Colonic mucosa (tissue), 4 donors: ENCODE measurements at regions of chr14 and their contacts with region 1.

Region 1: GRCh38 chr14:90235179-90235976 is 21.0 kb upstream of the PSMC1 start:
- DNase-seq: peak; percentile 70
- H3K4me3 ChIP-seq: no peak overlapping the region
- H3K27ac ChIP-seq: no peak overlapping the region
- H3K4me1 ChIP-seq: no peaks in the 10 kb centered on the region
- H3K27me3 ChIP-seq: no peaks in the 10 kb centered on the region
- CTCF ChIP-seq: peak; percentile 92

Region 2: DNA sequence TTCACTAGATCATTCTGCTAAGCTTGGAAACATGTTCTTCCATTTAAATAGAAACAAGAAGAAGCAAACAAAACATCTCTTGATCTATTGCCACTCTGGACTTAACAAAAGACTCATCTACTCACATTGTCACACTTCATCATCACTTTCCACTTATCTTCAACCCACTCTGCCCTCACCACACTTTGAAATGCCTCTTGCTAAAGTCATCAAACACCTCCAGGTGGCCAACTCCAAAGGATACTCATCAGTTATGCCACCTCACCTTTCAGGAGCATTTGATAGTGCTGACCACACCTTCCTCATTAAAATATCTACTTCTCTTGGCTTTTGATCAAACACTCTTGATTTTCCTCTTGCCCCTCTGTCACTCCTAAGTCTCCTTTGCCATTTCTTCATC is 288.0 kb before region 1 on chr14:
- intact Hi-C with region 1: loop called (anchors 10 kb)
- DNase-seq: no peak
- H3K4me3 ChIP-seq: no peak overlapping the region
- H3K27ac ChIP-seq: no peak overlapping the region
- H3K4me1 ChIP-seq: no peaks in the 10 kb centered on the region
- H3K27me3 ChIP-seq: no peaks in the 10 kb centered on the region
- CTCF ChIP-seq: no peak

Region 3: DNA sequence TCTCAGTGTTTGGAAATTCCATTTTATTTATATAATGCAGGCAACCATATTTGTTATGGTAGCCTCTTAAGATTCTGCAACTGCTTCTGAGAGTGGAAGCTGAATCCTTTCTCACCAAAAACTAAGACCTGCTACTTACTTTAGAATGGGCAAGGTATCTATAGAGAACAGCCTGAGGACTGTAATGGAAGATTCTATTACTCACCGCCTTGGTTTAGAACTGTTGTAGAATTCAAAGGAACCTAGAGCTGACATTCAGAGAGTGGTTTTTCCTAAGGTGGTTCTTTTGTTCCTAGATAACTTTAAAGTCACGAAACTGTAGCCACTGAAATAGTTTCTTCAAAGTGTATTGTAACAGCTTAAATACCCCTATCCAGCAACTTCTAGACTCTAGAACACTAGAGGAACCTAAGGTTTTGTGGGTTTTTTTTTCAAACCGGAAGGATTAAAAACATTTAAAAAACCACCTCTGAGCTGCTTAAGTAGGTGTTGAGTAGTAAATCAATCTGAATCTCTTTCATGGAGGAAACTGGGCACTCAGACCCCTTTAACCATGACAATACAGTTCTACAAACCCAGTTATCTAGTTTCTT is 275.4 kb before region 1 on chr14:
- intact Hi-C with region 1: no loop called
- DNase-seq: no peak
- H3K4me3 ChIP-seq: no peak overlapping the region
- H3K27ac ChIP-seq: no peak overlapping the region
- H3K4me1 ChIP-seq: no peaks in the 10 kb centered on the region
- H3K27me3 ChIP-seq: no peaks in the 10 kb centered on the region
- CTCF ChIP-seq: no peak

Region 4: DNA sequence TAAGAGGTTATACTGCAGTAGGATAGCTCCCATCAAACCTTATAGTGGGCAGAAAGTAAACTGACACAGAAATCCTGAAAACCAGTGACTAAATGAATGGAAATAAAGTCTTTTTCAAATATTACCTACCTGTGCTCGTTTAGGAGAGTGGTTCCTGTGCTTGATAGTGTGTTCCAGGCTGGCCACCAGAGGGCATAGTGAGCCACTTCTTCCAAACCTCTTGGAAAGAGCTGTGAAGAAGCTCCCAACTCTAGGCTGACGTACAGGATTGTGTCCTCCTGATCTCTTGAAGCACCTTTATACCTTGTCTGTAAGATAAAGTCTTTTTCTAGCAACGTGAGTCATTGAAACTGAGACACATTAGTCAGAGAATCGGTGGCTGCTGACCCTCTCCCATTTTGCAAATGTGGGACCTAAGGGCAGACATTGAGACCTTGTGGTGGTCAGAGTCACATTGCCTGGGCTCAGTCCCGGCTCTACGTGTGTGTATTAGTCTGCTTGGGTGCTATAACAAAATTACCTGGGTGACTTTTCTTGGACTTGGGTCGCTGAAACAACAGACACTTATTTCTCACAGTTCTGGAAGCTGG is 262.0 kb before region 1 on chr14:
- intact Hi-C with region 1: loop called (anchors 2 kb)
- DNase-seq: peak; percentile 59
- H3K4me3 ChIP-seq: no peak overlapping the region
- H3K27ac ChIP-seq: no peak overlapping the region
- H3K4me1 ChIP-seq: no peaks in the 10 kb centered on the region
- H3K27me3 ChIP-seq: no peaks in the 10 kb centered on the region
- CTCF ChIP-seq: peak; percentile 74

Region 5: GRCh38 chr14:90355540-90356518 is 120.5 kb after region 1 on chr14:
- intact Hi-C with region 1: no loop called
- DNase-seq: no peak
- H3K4me3 ChIP-seq: no peak overlapping the region
- H3K27ac ChIP-seq: no peak overlapping the region
- H3K4me1 ChIP-seq: no peaks in the 10 kb centered on the region
- H3K27me3 ChIP-seq: no peaks in the 10 kb centered on the region
- CTCF ChIP-seq: no peak